Heart left ventricle (tissue), 16 donors: ENCODE measurements at regions of chr18 and their contacts with region 1.

Region 1: GRCh38 chr18:57095884-57096283 is 51.0 kb upstream of the BOD1L2 start:
- DNase-seq: no peak
- ATAC-seq: no peak
- H3K4me3 ChIP-seq: no peak overlapping the region
- H3K27ac ChIP-seq: no peak overlapping the region
- H3K4me1 ChIP-seq: no peaks in the 10 kb centered on the region
- H3K27me3 ChIP-seq: peaks cover 0 to 6% (median 0%) of the 10 kb centered on the region in 9 donors
- CTCF ChIP-seq: no peak
- POLR2A ChIP-seq: no peak

Region 2: GRCh38 chr18:57029761-57030160 is 66.1 kb before region 1 on chr18:
- intact Hi-C with region 1: loop called in 1 of 10 experiments (anchors 10 kb)
- DNase-seq: no peak
- ATAC-seq: no peak
- H3K4me3 ChIP-seq: no peak overlapping the region
- H3K27ac ChIP-seq: no peak overlapping the region
- H3K4me1 ChIP-seq: no peaks in the 10 kb centered on the region
- H3K27me3 ChIP-seq: no peaks in the 10 kb centered on the region
- CTCF ChIP-seq: no peak
- POLR2A ChIP-seq: no peak